ENCODE measurements at regions of chr7 and their contacts with region 1.

Region 1: DNA sequence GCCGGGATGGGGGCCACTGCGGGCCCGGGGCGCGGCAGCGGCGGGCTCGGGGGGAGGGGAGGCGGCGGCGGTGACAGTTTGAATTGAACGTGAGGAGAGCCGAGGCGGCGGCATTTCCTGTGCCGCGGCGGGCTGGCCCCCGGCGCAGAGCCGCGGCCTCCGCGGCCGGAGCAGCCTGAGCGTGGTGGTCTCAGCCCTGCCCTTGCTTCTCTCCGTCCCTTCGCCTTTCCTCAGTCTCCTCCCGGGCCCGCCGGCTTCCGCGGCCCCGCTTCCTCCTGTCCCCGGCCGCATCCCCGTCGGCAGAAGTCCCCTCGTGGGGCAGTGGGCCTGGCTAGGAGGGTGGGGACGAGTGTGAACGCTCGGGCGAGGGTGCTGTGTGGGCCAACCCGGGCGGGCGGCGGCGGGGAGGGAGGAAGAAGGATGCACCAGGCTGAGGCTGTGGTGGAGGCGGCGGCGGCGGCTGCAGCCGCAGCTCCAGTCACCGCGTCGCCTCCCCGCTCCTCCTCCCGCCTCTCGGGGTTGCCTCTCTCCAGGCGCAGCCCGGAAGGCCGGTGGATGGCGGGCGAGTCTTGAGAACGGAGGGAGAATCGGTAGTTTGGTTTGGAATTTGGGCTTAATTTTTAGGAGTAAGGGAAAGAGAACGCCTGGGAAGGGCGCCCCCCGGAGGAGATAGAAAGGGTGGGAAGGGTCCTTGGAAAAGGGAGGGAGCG is 690 bp downstream of the SEPTIN7 start:
- DNase-seq: peak; percentile 61 to 76
- H3K4me3 ChIP-seq: peak overlapping the region; percentile 69
- H3K27ac ChIP-seq: peak overlapping the region; percentile 92
- H3K4me1 ChIP-seq: peaks cover 31% of the 10 kb centered on the region
- H3K27me3 ChIP-seq: no peaks in the 10 kb centered on the region
- CTCF ChIP-seq: peak; percentile 86

Region 2: DNA sequence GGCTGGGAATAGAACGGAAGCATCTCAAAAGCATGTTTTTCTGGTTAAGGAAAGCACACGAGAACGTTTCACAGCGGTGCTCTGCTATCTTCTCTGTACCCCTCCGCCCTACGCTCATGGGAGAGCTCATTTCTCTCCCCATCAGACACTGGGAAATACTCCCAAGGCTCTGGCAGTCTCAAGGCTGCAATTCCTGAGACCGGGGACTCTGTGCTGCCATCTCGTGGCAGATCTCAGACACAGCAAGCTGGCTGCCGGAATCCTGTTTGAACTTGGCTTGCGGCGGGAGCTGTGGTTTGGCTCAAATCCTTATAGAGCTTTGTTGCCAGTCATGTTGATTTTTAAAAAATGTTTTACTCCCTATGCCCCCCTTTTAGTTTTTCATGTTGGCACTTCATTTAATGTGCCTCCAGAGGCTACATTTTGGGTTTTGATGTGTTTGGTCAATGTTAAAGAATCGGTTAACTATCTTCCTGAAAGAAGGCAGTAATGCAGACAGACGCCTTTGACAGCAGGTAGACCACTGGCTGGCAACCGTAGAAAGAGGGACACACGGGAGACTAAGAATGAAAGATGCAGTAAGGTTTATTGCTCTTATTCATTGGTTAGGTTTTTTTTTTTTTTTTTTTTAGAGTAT is 1868.6 kb before region 1 on chr7:
- CTCF ChIA-PET with region 1: no interaction called
- POLR2A ChIA-PET with region 1: no interaction called
- intact Hi-C with region 1: no loop called
- DNase-seq: peak; percentile 59 to 77
- H3K4me3 ChIP-seq: no peak overlapping the region
- H3K27ac ChIP-seq: no peak overlapping the region
- H3K4me1 ChIP-seq: no peaks in the 10 kb centered on the region
- H3K27me3 ChIP-seq: 0 out of 2 replicates have a peak, but pooled peaks cover 9% of the 10 kb centered on the region
- CTCF ChIP-seq: peak; percentile 98

Region 3: DNA sequence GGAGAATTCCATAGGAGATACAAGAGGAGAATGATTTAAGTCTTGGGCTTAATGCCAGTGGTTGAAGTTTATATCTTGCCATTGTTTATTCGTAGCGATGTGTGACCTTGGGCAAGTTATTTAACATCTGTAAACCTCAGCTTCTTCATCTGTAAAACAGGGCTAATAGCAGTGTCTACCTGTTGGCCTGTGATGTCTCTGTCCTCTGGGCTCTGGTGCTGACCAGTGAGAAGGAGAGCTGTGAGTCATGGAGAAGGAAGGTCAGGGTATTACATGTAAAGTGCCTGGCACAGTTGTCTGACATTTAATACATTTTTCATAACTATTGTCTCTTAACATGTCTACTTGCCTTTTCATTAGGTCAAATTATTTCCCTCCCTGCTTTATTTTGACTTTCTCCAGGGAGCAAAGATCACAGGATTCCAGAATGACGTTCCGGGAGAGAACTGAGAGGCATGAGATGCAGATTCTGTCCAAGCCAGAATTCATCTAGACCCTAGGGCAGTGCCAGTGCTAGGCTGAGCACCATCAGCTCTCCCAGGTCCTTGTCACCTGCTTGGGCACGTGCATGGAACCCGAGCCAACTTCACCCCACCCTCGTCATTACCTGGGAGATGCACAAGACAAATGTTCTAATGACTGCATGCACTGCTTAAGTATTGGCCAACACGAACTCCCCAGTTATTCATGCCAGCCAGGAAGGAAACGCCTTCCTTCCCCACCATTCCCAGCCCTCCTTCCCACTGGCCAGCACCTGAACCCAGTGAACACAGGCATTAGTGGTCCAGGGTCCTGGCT is 952.2 kb before region 1 on chr7:
- CTCF ChIA-PET with region 1: no interaction called
- POLR2A ChIA-PET with region 1: interaction called, 10 read pairs
- intact Hi-C with region 1: no loop called
- DNase-seq: peak in 1 of 2 experiments; percentile 25
- H3K4me3 ChIP-seq: no peak overlapping the region
- H3K27ac ChIP-seq: no peak overlapping the region
- H3K4me1 ChIP-seq: peaks cover 17% of the 10 kb centered on the region
- H3K27me3 ChIP-seq: no peaks in the 10 kb centered on the region
- CTCF ChIP-seq: no peak

Region 4: DNA sequence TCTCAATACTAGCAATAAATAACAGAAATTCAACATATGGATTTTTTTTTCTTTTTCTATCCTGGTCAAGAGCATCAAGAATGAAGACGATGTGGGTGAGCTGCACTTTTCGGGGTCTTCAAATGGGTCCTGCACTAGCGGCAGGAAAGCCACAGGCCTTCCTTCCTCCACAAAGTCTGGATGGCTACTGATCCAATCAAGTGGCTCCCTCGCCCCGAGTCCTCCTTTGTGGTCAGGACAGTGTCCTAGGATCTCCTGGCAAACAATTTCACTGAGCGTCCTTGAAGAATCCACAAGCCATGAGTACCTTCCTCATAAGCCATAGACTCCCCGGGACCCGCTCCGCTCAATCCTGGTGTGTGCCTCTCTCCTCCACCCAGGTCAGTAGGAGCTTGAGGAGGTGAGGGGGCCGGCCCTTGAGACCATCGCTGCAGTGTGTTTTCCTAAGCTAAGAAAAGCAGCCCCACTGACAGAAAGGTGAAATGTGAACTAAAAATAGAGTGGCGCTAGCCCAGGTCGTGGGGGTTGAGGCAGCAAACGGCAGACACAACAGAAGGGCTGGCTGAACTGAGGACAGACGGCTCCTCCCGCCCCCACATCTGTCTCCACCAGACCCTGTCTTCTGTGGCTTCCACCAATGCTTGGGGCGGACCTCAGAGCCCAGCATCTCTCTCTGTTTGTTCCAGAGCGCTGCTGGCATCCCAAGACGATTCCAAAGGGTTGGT is 308.9 kb before region 1 on chr7:
- CTCF ChIA-PET with region 1: no interaction called
- POLR2A ChIA-PET with region 1: no interaction called
- intact Hi-C with region 1: no loop called
- DNase-seq: no peak
- H3K4me3 ChIP-seq: no peak overlapping the region
- H3K27ac ChIP-seq: no peak overlapping the region
- H3K4me1 ChIP-seq: no peaks in the 10 kb centered on the region
- H3K27me3 ChIP-seq: no peaks in the 10 kb centered on the region
- CTCF ChIP-seq: no peak

Region 5: DNA sequence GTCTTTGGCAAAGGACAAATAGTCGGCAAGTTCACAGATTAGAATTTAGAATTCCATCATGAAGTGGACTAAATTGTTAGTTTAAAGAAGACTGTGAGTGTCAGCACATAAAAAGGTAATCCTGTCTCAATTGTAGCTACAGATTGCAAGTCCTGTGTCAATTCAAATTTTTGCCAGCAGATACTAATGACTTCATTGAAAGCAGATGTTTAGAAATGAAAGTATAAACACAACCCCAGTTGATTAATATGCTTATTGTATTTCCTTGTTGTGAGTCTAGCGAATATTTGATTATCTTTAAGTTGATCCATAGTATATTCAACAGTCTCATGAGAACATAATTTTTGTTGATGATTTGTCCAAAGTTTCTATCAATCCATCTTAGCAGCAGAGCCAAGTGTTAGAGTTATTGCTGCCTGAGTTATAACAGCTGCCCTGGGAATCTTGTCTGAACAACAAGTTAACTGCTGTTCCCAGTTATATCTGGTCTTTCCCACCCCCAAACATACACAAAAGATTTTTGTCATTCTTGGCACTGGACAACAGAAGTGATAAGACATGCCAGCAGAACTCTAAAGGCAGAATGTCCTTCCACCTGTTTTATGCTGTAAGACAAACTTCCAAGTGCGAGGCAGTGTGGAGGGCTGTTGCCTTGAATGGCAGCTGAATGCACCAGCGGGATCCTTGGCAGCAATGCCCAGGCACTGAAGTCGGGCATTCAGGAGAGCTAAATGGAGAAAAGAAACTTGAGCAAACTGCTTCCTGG is 85.3 kb before region 1 on chr7:
- CTCF ChIA-PET with region 1: no interaction called
- POLR2A ChIA-PET with region 1: no interaction called
- intact Hi-C with region 1: loop called (anchors 1 kb)
- DNase-seq: no peak
- H3K4me3 ChIP-seq: no peak overlapping the region
- H3K27ac ChIP-seq: no peak overlapping the region
- H3K4me1 ChIP-seq: no peaks in the 10 kb centered on the region
- H3K27me3 ChIP-seq: no peaks in the 10 kb centered on the region
- CTCF ChIP-seq: no peak

Region 6: GRCh38 chr7:35781200-35781701 is 20.3 kb before region 1 on chr7:
- CTCF ChIA-PET with region 1: no interaction called
- POLR2A ChIA-PET with region 1: no interaction called
- intact Hi-C with region 1: no loop called
- DNase-seq: no peak
- H3K4me3 ChIP-seq: no peak overlapping the region
- H3K27ac ChIP-seq: no peak overlapping the region
- H3K4me1 ChIP-seq: no peaks in the 10 kb centered on the region
- H3K27me3 ChIP-seq: no peaks in the 10 kb centered on the region
- CTCF ChIP-seq: no peak

Region 7: GRCh38 chr7:35985126-35985754 is 183.7 kb after region 1 on chr7:
- CTCF ChIA-PET with region 1: no interaction called
- POLR2A ChIA-PET with region 1: no interaction called
- intact Hi-C with region 1: no loop called
- DNase-seq: peak; percentile 57 to 84
- H3K4me3 ChIP-seq: no peak overlapping the region
- H3K27ac ChIP-seq: no peak overlapping the region
- H3K4me1 ChIP-seq: peaks cover 18% of the 10 kb centered on the region
- H3K27me3 ChIP-seq: no peaks in the 10 kb centered on the region
- CTCF ChIP-seq: peak; percentile 99

Region 8: GRCh38 chr7:36128448-36129047 is 327.0 kb after region 1 on chr7:
- CTCF ChIA-PET with region 1: no interaction called
- POLR2A ChIA-PET with region 1: interaction called, 10 read pairs
- intact Hi-C with region 1: no loop called
- DNase-seq: peak; percentile 82 to 95
- H3K4me3 ChIP-seq: peak overlapping the region; percentile 40
- H3K27ac ChIP-seq: peak overlapping the region; percentile 86
- H3K4me1 ChIP-seq: peaks cover 33% of the 10 kb centered on the region
- H3K27me3 ChIP-seq: no peaks in the 10 kb centered on the region
- CTCF ChIP-seq: peak; percentile 100

Region 9: GRCh38 chr7:37031571-37032257 is 1230.2 kb after region 1 on chr7:
- CTCF ChIA-PET with region 1: no interaction called
- POLR2A ChIA-PET with region 1: no interaction called
- intact Hi-C with region 1: loop called (anchors 5 kb)
- DNase-seq: peak; percentile 82 to 98
- H3K4me3 ChIP-seq: peak overlapping the region; percentile 1; the same call in 1 of the 2 replicates
- H3K27ac ChIP-seq: peak overlapping the region; percentile 56
- H3K4me1 ChIP-seq: peaks cover 20% of the 10 kb centered on the region
- H3K27me3 ChIP-seq: no peaks in the 10 kb centered on the region
- CTCF ChIP-seq: no peak

Measured in PC-9 (cell line).